ENCODE measurements at regions of chr19 and their contacts with region 1.

Region 1: DNA sequence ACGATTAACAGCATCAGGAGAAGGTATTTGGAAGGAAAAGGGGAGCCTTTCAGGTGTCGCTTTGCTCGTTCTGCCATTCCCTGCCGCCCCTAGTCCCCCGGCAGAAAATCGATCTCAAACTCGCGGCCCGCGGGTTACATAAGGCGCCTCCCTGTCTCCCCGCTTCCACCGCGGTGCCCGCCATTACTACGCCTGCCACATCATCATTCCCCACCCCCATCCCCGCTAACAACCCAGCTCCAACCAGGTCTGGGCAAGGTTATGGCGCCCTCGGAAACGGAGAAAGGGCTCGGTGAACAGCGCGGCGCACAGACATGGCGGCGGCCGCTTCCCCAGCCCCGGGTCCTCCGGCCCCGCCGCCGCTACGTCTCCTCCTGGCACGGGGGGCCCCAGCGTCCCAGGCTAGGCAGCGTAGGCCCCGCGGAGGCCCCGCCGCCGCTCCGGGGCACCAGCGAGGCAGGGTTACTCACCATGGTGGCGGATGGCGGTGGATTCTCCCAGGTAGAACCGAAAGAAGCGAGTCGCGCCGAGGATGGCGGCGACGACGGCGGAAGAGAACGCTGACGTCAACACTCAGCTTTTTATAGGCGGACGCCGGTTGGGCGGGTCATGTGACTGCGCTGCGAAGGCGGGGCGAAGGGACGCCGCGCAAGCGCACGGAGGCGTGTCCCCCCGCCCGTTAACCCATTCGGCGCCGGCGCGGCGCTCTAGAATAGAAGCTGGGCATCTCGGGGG is at the start of gene EEF2:
- DNase-seq: peak; percentile 96
- H3K4me3 ChIP-seq: peak within 1 kb of the TSS; percentile 93
- H3K27ac ChIP-seq: peak within 1 kb of the TSS; percentile 87
- H3K4me1 ChIP-seq: peaks cover 42% of the 10 kb centered on the region
- CTCF ChIP-seq: no peak
- total RNA-seq, gene EEF2: 1,633 and 1,634 TPM in 2 replicates

Region 2: DNA sequence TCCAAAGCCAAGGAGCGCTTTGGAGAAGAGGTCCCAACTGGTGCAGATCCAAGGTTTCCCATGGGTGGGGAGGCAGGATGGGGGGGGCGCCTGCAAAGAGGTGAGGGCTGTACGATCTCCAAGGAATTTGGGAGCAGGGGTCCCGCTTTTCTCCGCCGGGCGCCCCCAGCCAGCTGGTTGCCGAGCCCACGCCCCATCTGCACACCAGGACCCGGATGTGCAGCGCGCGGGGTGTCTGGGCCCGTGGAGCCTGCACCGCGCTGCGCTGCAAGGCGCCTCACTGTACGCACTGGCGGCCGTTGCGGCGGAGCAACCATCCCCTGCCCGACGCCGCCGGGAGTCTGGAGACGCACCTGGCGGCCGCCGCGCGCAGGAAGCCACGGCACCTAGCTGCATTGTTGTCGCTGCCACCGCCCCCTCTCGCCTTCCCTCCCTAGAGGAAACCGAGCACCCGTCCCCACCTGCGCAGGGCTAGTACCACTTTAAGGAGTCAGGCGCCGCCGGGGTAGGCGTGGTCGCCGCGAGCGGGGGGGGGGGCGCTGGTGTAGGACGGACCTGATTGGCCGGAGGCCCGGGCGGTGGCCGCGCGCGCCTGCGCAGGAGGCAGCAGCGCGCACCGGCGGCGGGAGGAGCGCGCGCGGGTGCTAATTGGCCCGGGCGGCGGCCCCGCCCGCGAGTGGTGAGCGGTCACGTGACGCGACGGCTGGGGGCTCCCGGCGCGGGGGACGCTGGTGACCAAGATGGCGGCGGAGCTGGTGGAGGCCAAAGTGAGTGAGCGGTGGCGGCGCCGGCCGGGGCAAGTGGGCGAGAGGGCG is 22.2 kb after region 1 on chr19 and contains the start of gene PIAS4:
- CTCF ChIA-PET with region 1: interaction called, 5 read pairs
- POLR2A ChIA-PET with region 1: interaction called, 5 read pairs
- intact Hi-C with region 1: loop called (anchors 1 kb)
- DNase-seq: peak; percentile 98
- H3K4me3 ChIP-seq: peak within 1 kb of the TSS; percentile 96
- H3K27ac ChIP-seq: peak within 1 kb of the TSS; percentile 80
- H3K4me1 ChIP-seq: peaks cover 14% of the 10 kb centered on the region
- CTCF ChIP-seq: 0 out of 2 replicates have a peak, but pooled peaks have one; percentile 13
- total RNA-seq, gene PIAS4: 25.3 and 31.5 TPM in 2 replicates

Region 3: GRCh38 chr19:4044990-4045465 is 60.0 kb after region 1 on chr19:
- CTCF ChIA-PET with region 1: no interaction called
- POLR2A ChIA-PET with region 1: no interaction called
- intact Hi-C with region 1: no loop called
- DNase-seq: no peak
- H3K4me3 ChIP-seq: no peak overlapping the region
- H3K27ac ChIP-seq: no peak overlapping the region
- H3K4me1 ChIP-seq: no peaks in the 10 kb centered on the region
- CTCF ChIP-seq: no peak

Region 4: GRCh38 chr19:4123615-4124568 is 138.8 kb after region 1 on chr19 and contains the start of gene MAP2K2:
- CTCF ChIA-PET with region 1: no interaction called
- POLR2A ChIA-PET with region 1: no interaction called
- intact Hi-C with region 1: loop called (anchors 5 kb)
- DNase-seq: peak; percentile 96
- H3K4me3 ChIP-seq: peak within 1 kb of the TSS; percentile 75
- H3K27ac ChIP-seq: peak within 1 kb of the TSS; percentile 22
- H3K4me1 ChIP-seq: peaks cover 15% of the 10 kb centered on the region
- CTCF ChIP-seq: no peak
- total RNA-seq, gene MAP2K2: 84.7 and 105 TPM in 2 replicates

Region 5: DNA sequence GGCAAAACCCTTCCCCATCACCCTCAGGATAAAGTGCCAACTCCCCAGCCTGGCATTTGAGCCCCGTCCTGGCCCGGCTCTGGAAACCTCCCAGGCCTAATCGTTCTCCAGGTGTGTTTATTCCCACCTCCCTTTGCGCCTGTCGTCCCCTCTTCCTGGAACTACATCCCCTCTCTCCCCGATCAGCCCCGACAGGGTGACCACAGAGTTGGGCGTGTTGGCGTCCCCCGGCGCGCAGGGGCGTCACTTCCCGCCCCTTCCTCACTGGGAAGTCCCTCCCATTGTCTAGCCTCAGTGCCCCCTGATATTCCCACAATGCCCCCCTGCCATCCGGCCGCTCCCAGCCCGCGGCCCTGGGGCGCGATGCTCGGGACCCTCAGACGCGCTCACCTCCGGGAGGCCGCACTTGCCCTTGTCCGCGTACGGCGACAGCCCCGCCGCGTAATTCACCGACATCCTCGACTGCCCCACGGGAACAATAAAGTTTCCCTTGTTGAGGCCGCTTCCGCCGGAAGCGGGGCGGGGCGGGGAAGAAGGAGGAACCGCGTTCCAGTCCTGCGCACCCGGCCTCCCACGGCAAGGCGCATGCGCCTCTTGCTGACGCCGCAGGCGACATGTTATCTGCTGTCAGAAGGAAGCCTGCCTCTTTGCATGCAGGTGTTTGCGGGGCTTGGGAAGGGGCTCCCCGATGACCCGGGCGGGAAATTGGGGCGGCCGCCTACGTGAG is 197.2 kb after region 1 on chr19 and contains the starts of genes ANKRD24 and SIRT6:
- CTCF ChIA-PET with region 1: no interaction called
- POLR2A ChIA-PET with region 1: no interaction called
- intact Hi-C with region 1: loop called (anchors 2 kb)
- DNase-seq: peak; percentile 98
- H3K4me3 ChIP-seq: peak within 1 kb of the TSS; percentile 88
- H3K27ac ChIP-seq: peak within 1 kb of the TSS; percentile 76
- H3K4me1 ChIP-seq: peaks cover 25% of the 10 kb centered on the region
- CTCF ChIP-seq: no peak
- total RNA-seq, gene ANKRD24: 1.7 and 2.8 TPM in 2 replicates
- total RNA-seq, gene SIRT6: 29.1 and 31.7 TPM in 2 replicates

Region 6: DNA sequence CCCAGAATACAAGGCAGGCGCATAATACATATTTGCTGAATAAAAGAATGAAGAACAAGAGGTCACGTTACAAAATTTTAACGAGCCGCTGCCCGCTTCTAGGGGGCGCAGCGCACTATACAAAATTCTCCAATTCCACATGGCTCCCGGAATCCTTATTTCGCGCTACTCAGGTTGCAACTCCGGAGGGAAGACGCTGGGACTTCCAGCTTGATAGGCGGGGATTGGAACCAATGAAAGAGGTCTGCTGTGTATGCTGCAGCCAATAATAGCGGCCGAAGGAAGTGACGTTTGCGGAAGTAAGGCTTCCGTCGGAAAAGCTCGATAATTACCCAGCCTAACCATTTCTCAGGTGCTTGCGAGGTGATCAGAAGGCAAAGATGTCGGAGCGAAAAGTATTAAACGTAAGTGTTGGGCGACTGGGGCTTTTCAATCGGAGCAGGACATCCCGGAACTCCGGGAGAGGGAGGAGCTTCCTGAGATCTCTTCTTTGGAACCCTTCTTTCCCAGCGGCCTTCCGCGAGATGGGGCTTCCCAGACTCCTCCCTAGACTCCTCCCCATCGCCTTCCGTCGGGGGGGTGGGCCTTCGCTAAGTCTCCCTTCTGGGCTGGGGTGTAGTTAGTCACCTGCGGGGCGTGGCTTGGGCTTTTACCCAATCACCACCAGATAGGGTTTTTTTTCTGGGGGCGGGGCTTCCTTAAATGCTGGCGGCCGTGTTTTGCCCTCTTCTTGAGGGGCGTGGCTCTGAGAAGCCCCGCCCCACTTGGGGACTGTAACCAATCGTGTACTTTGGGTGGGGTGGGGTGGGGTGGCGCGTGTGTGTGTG is 261.9 kb after region 1 on chr19 and contains the start of gene YJU2:
- CTCF ChIA-PET with region 1: no interaction called
- POLR2A ChIA-PET with region 1: interaction called, 8 read pairs
- intact Hi-C with region 1: loop called (anchors 5 kb)
- DNase-seq: peak; percentile 100
- H3K4me3 ChIP-seq: peak within 1 kb of the TSS; percentile 74
- H3K27ac ChIP-seq: peak within 1 kb of the TSS; percentile 83
- H3K4me1 ChIP-seq: peaks cover 27% of the 10 kb centered on the region
- CTCF ChIP-seq: peak; percentile 86
- total RNA-seq, gene YJU2: 37.8 and 38.2 TPM in 2 replicates